OCI-LY7 (cell line): ENCODE measurements at regions of chr11 and their contacts with region 1.

Region 1: GRCh38 chr11:62370743-62371440 is 33.6 kb downstream of the ASRGL1 start:
- DNase-seq: no peak
- H3K4me3 ChIP-seq: no peak overlapping the region
- H3K27ac ChIP-seq: no peak overlapping the region
- H3K4me1 ChIP-seq: no peaks in the 10 kb centered on the region
- CTCF ChIP-seq: no peak

Region 2: GRCh38 chr11:62383822-62384221 is 12.9 kb after region 1 on chr11:
- CTCF ChIA-PET with region 1: no interaction called
- POLR2A ChIA-PET with region 1: no interaction called
- intact Hi-C with region 1: loop called (anchors 2 kb)
- DNase-seq: no peak
- H3K4me3 ChIP-seq: no peak overlapping the region
- H3K27ac ChIP-seq: no peak overlapping the region
- H3K4me1 ChIP-seq: no peaks in the 10 kb centered on the region
- CTCF ChIP-seq: no peak

Region 3: DNA sequence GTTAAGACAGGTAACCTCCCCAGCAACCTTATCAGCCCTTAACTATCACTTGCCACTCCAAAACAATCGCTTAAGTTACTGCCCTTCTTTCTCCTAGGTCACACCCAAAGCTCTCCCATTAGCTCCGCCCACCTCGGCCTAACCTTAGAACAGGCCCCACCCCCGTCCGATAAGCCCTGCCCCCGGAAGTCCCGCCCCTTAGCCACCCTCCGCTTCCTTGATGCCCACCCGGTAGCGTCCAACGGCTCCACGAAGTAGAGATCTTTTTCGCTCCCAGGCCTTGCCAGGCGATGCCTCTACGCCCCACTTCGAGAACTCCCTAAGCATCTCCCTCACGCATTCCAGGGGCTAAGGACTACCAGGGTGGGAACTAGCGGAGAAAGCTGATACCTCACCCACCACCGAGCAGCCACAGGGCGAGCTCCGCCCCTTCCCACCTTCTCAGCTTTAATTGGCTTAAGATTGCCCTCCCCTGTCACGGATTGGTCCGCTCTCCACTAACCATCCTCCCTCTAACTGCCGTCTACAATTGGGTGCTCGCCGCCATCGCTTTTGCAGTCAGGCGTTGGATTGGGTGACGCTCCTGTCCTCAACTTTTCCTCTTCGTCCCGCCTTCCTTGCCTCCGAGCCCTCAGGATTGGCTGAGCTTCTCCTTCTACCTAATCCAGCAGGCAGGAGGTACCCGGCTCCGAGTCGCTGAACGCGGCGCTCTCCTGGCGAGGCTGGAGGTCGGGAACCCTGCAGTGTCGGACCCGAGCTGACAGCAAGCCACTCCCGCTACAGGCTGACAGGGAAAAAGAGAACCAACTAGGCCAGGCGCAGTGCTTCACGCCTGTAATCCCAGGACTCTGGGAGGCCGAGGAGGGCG is 383.1 kb after region 1 on chr11 and contains the start of gene ZBTB3:
- CTCF ChIA-PET with region 1: no interaction called
- POLR2A ChIA-PET with region 1: no interaction called
- intact Hi-C with region 1: no loop called
- DNase-seq: peak; percentile 99
- H3K4me3 ChIP-seq: peak within 1 kb of the TSS; percentile 71
- H3K27ac ChIP-seq: peak within 1 kb of the TSS; percentile 60
- H3K4me1 ChIP-seq: peaks cover 20% of the 10 kb centered on the region
- CTCF ChIP-seq: no peak
- total RNA-seq, gene ZBTB3: 11.1 and 11.8 TPM in 2 replicates